AG04450 (cell line): ENCODE measurements at regions of chr1 and their contacts with region 1.

Region 1: GRCh38 chr1:7752512-7753417 is 18.3 kb upstream of the VAMP3 start:
- DNase-seq: peak; percentile 41
- H3K4me3 ChIP-seq: peak overlapping the region; percentile 55
- H3K27ac ChIP-seq: no peak overlapping the region
- H3K27me3 ChIP-seq: peaks cover 6% of the 10 kb centered on the region
- CTCF ChIP-seq: peak; percentile 87

Region 2: GRCh38 chr1:7680207-7680954 is 72.4 kb before region 1 on chr1:
- CTCF ChIA-PET with region 1: interaction called, 58 read pairs
- POLR2A ChIA-PET with region 1: no interaction called
- DNase-seq: no peak
- H3K4me3 ChIP-seq: peak overlapping the region; percentile 64
- H3K27ac ChIP-seq: no peak overlapping the region
- H3K27me3 ChIP-seq: peaks cover 40% of the 10 kb centered on the region
- CTCF ChIP-seq: no peak

Region 3: DNA sequence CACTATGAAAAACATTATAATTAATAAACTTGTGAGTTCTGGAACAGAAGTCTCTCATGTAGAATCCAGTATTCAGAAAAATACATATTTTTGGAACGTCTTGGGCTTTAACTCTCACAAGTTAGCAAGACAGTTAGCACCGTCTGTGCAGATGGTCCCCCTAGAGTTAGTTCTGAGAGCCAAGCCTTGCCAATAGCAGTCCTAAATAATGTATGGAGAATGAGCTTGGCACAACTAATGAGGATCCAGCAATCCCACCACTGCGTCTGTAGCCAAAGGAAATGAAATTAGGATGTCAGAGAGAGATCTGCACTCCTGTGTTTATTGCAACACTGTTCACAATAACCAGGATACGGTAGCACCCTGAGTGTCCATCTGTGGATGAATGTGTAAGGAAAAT is 36.3 kb before region 1 on chr1:
- CTCF ChIA-PET with region 1: interaction called, 11 read pairs
- POLR2A ChIA-PET with region 1: no interaction called
- DNase-seq: no peak
- H3K4me3 ChIP-seq: no peak overlapping the region
- H3K27ac ChIP-seq: no peak overlapping the region
- H3K27me3 ChIP-seq: peaks cover 23% of the 10 kb centered on the region
- CTCF ChIP-seq: no peak

Region 4: GRCh38 chr1:7738044-7738443 is 14.7 kb before region 1 on chr1:
- CTCF ChIA-PET with region 1: interaction called, 22 read pairs
- POLR2A ChIA-PET with region 1: no interaction called
- DNase-seq: no peak
- H3K4me3 ChIP-seq: no peak overlapping the region
- H3K27ac ChIP-seq: no peak overlapping the region
- H3K27me3 ChIP-seq: peaks cover 9% of the 10 kb centered on the region
- CTCF ChIP-seq: no peak

Region 5: DNA sequence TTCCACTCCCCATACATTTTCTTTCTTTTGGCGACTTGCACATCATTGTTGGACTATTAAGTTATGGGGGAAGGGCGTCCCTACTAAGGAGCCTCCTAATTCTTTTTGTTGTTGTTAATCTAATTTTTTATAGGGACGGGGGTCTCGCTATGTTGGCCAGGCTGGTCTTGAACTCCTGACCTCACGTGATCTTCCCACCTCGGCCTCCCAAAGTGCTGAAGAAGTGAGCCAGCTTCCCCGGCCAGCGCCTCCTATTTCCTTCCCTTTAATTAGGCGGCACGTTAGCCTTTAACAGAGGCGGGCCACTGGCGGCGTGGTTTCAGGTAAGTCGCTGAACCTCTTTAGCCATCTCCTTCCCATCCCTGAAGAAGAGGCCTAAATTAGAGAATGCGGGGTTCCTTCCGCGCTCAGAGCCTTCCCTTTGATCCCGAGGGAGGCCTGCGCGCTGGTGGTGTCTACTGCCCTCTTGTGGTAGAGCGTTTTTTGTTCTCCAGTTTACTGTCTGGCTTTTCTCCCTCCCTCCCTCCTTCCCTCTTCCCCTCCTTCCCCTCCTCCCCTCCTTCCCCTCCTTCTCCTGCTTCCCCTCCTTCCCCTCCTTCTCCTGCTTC is 149.8 kb after region 1 on chr1:
- CTCF ChIA-PET with region 1: interaction called, 14 read pairs
- POLR2A ChIA-PET with region 1: no interaction called
- DNase-seq: peak; percentile 46
- H3K4me3 ChIP-seq: no peak overlapping the region
- H3K27ac ChIP-seq: no peak overlapping the region
- H3K27me3 ChIP-seq: no peaks in the 10 kb centered on the region
- CTCF ChIP-seq: peak; percentile 79